A549 (cell line): ENCODE measurements at regions of chr1 and their contacts with region 1.

Region 1: DNA sequence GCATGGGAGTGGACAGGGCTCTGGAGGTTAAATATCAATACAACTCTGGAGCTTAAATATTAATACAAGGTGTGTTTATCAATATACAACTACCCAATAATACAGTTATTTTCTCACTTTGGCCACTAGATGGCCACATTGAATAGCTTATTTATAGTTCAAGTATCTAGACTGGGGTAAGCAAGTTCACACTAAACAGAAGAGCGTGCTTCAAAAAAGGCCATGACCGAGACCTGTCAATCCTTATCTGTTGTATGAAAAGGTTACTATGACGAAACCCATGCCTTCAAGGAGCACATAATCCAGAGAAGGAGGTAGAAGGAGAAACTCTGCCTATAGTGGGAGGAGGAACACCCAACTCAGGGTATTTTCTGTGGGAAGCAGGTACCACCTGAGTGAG is 29.1 kb downstream of the CHML start:
- DNase-seq: peak; percentile 57 to 90
- ATAC-seq: peak; percentile 41 to 63
- H3K4me3 ChIP-seq: no peak overlapping the region
- H3K27ac ChIP-seq: peak overlapping the region; percentile 89 to 90
- H3K4me1 ChIP-seq: peaks cover 95% of the 10 kb centered on the region
- CTCF ChIP-seq: peak; percentile 86
- EP300 ChIP-seq: no peak
- POLR2A ChIP-seq: no peak
- RAD21 ChIP-seq: peak; percentile 89

Region 2: DNA sequence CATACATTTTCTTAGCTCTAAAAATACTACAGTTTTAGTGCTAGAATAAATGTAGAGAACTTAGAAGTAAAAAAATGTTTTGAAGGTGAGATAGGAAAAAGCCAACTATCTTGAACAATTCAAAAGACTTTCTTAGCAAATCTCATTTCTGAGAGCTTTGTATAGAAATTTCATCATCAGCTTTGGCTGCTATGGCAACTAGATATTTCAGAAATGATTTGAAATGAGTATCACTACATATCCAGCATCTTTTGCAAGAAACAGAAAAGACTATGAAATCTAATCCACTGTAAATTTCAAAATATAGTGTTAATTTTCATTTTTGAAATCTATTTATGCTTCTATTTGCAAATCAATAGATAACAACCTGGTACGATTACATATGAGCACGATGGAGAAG is 311.7 kb before region 1 on chr1:
- CTCF ChIA-PET with region 1: no interaction called
- POLR2A ChIA-PET with region 1: no interaction called
- DNase-seq: no peak
- ATAC-seq: no peak
- H3K4me3 ChIP-seq: no peak overlapping the region
- H3K27ac ChIP-seq: no peak overlapping the region
- H3K4me1 ChIP-seq: no peaks in the 10 kb centered on the region
- CTCF ChIP-seq: no peak
- EP300 ChIP-seq: no peak
- POLR2A ChIP-seq: no peak
- RAD21 ChIP-seq: no peak

Region 3: GRCh38 chr1:241525026-241525425 is 86.0 kb before region 1 on chr1:
- CTCF ChIA-PET with region 1: interaction called, 12 read pairs
- POLR2A ChIA-PET with region 1: no interaction called
- DNase-seq: no peak
- ATAC-seq: no peak
- H3K4me3 ChIP-seq: no peak overlapping the region
- H3K27ac ChIP-seq: no peak overlapping the region
- H3K4me1 ChIP-seq: no peaks in the 10 kb centered on the region
- CTCF ChIP-seq: no peak
- EP300 ChIP-seq: no peak
- POLR2A ChIP-seq: no peak
- RAD21 ChIP-seq: no peak

Region 4: GRCh38 chr1:241592273-241592958 is 18.6 kb before region 1 on chr1:
- CTCF ChIA-PET with region 1: interaction called, 28 read pairs
- POLR2A ChIA-PET with region 1: interaction called, 5 read pairs
- DNase-seq: no peak
- ATAC-seq: peak; percentile 77 to 87
- H3K4me3 ChIP-seq: no peak overlapping the region
- H3K27ac ChIP-seq: peak overlapping the region; percentile 57 to 82; a peak in 5 of 6 replicates
- H3K4me1 ChIP-seq: peaks cover 37% of the 10 kb centered on the region
- CTCF ChIP-seq: no peak
- EP300 ChIP-seq: no peak
- POLR2A ChIP-seq: no peak
- RAD21 ChIP-seq: no peak

Region 5: GRCh38 chr1:241640029-241640818 is 29.2 kb after region 1 on chr1 and contains the starts of genes CHML and OPN3:
- CTCF ChIA-PET with region 1: interaction called, 24 read pairs
- POLR2A ChIA-PET with region 1: interaction called, 9 read pairs
- DNase-seq: peak; percentile 82 to 92
- ATAC-seq: peak; percentile 78 to 87
- H3K4me3 ChIP-seq: peak within 1 kb of the TSS; percentile 74
- H3K27ac ChIP-seq: peak within 1 kb of the TSS; percentile 89 to 98
- H3K4me1 ChIP-seq: peaks cover 41% of the 10 kb centered on the region
- CTCF ChIP-seq: no peak
- EP300 ChIP-seq: no peak
- POLR2A ChIP-seq: peak; percentile 87
- RAD21 ChIP-seq: no peak; a peak in 1 of 5 replicates
- polyA plus RNA-seq, gene CHML: 12.5 and 15.2 TPM in 2 replicates
- polyA plus RNA-seq, gene OPN3: 119 and 144 TPM in 2 replicates

Region 6: DNA sequence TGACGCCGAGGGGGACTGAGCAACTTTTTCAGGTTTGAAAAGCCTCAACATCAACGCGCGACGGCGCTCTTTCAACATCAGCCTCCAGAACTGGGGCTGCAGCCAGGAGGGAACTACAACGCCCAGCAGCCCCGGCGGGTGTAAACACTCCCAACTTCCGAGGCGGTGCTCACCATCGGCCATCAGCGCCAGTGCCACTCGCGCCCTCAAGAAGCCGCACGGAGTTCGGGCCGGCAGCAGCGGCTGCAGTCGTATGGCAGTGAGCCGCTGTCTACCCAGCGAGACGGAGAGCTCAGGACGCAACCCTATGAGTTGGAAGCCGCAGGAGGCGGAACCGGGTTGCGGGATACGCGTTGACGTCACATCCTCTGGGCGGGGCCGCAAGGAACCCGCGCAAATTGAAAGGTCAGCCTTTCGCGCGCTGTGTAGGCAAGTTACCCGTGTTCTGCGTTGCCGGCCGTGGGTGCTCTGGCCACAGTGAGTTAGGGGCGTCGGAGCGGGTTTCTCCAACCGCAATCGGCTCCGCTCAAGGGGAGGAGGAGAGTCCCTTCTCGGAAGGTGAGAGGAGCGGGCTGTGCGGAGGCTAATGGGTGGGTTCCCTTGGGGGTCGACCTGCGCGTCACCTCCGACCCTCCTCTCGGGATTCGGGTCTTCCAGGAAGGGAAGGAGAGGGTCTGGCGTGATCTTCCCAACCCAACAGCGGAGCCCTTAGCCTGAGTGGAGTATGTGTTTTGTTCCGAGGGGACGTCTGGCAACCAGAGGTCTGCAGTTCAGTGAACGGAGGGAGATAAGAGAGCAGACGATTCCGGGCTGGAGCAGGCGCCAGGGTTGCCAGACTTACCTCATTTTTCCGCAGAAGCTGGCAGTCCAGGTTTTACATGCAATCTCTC is 237.0 kb after region 1 on chr1 and contains the start of gene EXO1:
- CTCF ChIA-PET with region 1: interaction called, 48 read pairs
- POLR2A ChIA-PET with region 1: no interaction called
- DNase-seq: peak; percentile 93 to 98
- ATAC-seq: peak; percentile 96 to 97
- H3K4me3 ChIP-seq: peak within 1 kb of the TSS; percentile 81
- H3K27ac ChIP-seq: peak within 1 kb of the TSS; percentile 94 to 99
- H3K4me1 ChIP-seq: peaks cover 16% of the 10 kb centered on the region
- CTCF ChIP-seq: peak; percentile 64
- EP300 ChIP-seq: no peak
- POLR2A ChIP-seq: peak; percentile 54
- RAD21 ChIP-seq: peak; percentile 59 to 61
- polyA plus RNA-seq, gene EXO1: 22.1 and 33.1 TPM in 2 replicates